Calu3 (cell line): ENCODE measurements at regions of chr9 and their contacts with region 1.

Region 1: DNA sequence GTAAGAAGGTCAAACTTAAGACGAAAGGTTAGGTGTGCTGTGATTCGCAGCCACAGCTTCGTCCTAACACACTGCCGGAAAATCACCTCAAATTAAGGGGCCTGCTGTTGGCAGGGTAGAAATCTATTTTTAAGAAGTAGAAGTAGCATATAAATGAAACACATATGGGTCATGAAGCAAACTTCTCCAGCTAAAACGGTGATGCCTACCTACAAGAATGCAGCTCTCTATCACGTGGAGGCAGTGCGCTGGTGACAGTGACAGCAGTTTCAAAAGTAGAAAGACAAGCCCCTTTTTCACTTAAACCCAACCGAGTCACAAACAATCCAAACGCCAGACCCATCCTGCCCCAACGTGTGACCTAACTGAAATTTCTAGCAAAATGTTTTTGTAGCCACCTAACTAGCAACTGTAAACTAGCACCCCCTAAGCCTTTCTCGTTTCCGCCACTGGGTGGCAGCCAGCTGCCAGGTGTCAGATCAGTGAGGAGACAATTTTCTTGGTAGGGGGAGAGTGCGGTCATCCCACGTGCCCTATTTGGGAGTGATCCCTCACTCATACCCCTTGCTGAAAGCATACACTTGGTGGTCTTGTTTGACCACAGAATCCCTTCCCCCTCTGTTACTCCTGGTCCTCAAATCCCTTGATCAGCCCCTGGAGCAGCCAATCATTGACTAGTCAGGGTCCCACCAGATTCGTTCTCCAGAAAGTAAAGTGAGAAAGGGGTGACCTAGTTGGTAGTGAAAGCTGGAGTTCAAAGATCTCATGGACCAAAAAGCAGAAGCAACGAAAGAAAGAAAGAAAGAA is 71.8 kb upstream of the MAMDC2 start:
- DNase-seq: peak; percentile 67
- H3K4me3 Mint-ChIP-seq: no peak overlapping the region
- H3K27ac Mint-ChIP-seq: peak overlapping the region; percentile 37
- H3K4me1 Mint-ChIP-seq: peaks cover 8% of the 10 kb centered on the region
- H3K27me3 Mint-ChIP-seq: no peaks in the 10 kb centered on the region
- CTCF ChIP-seq: peak; percentile 72

Region 2: GRCh38 chr9:70111042-70111602 is 139.3 kb after region 1 on chr9:
- CTCF ChIA-PET with region 1: interaction called, 52 read pairs
- intact Hi-C with region 1: loop called (anchors 1 kb)
- DNase-seq: peak; percentile 64
- H3K4me3 Mint-ChIP-seq: no peak overlapping the region
- H3K27ac Mint-ChIP-seq: peak overlapping the region; percentile 24
- H3K4me1 Mint-ChIP-seq: peaks cover 51% of the 10 kb centered on the region
- H3K27me3 Mint-ChIP-seq: no peaks in the 10 kb centered on the region
- CTCF ChIP-seq: peak; percentile 46

Region 3: GRCh38 chr9:70197216-70198044 is 225.6 kb after region 1 on chr9:
- CTCF ChIA-PET with region 1: no interaction called
- intact Hi-C with region 1: no loop called
- DNase-seq: no peak
- H3K4me3 Mint-ChIP-seq: no peak overlapping the region
- H3K27ac Mint-ChIP-seq: no peak overlapping the region
- H3K4me1 Mint-ChIP-seq: peaks cover 6% of the 10 kb centered on the region
- H3K27me3 Mint-ChIP-seq: no peaks in the 10 kb centered on the region
- CTCF ChIP-seq: no peak

Region 4: GRCh38 chr9:70229579-70229978 is 257.7 kb after region 1 on chr9:
- CTCF ChIA-PET with region 1: no interaction called
- intact Hi-C with region 1: loop called (anchors 10 kb)
- DNase-seq: no peak
- H3K4me3 Mint-ChIP-seq: no peak overlapping the region
- H3K27ac Mint-ChIP-seq: no peak overlapping the region
- H3K4me1 Mint-ChIP-seq: no peaks in the 10 kb centered on the region
- H3K27me3 Mint-ChIP-seq: no peaks in the 10 kb centered on the region
- CTCF ChIP-seq: no peak